ENCODE measurements at regions of chr11 and their contacts with region 1.

Region 1: GRCh38 chr11:114400217-114400914 is at the starts of genes C11orf71 and RBM7:
- DNase-seq: peak; percentile 99
- H3K4me3 ChIP-seq: peak within 1 kb of the TSS; percentile 79
- H3K27ac ChIP-seq: peak within 1 kb of the TSS; percentile 67
- H3K4me1 ChIP-seq: peaks cover 30% of the 10 kb centered on the region
- CTCF ChIP-seq: no peak
- total RNA-seq, gene C11orf71: 13.5 and 28.7 TPM in 2 replicates
- total RNA-seq, gene RBM7: 21.3 and 28.6 TPM in 2 replicates

Region 2: DNA sequence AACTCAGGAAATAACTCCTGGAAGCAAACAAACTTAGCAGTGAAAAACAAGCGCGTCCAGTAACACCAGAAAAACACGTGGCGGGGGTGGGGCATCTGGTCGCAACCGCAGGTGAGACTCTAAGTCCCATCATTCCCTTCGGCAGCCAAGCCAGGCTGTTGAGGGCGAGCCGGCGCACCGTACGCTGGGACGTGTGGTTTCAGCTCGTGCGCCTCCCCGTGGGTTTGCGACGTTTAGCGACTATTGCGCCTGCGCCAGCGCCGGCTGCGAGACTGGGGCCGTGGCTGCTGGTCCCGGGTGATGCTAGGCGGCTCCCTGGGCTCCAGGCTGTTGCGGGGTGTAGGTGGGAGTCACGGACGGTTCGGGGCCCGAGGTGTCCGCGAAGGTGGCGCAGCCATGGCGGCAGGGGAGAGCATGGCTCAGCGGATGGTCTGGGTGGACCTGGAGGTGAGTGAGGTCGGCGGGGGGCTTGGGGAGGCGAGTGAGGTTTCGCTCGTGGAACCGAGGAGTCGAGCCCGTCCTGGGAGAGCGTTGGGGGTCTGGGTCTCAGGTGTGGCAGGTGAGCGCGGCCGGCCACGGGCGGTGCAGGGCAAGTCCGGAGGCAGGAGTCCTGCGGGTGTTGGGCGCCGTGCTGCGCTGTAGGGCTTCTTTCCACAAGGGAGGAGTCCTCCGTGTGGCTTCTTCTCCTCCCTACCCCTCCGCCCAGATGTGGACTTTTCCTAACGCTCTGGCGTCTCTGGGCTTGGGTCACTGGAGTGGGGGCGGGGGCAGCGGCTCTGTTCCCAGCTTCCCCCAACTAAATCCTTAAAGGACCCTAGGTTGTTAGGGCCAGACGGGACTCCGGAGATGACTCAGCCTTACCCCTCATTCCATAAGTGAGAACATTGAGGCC is 39.1 kb after region 1 on chr11 and contains the start of gene REXO2:
- CTCF ChIA-PET with region 1: no interaction called
- POLR2A ChIA-PET with region 1: interaction called, 3 read pairs
- intact Hi-C with region 1: loop called (anchors 1 kb)
- DNase-seq: peak; percentile 96
- H3K4me3 ChIP-seq: peak within 1 kb of the TSS; percentile 91
- H3K27ac ChIP-seq: no peak within 1 kb of the TSS
- H3K4me1 ChIP-seq: peaks cover 21% of the 10 kb centered on the region
- CTCF ChIP-seq: no peak
- total RNA-seq, gene REXO2: 59.9 and 69.3 TPM in 2 replicates